A673 (cell line): ENCODE measurements at regions of chr7 and their contacts with region 1.

Region 1: GRCh38 chr7:4689668-4690067 is 7.6 kb downstream of the FOXK1 start:
- DNase-seq: no peak
- H3K4me3 ChIP-seq: peak overlapping the region; percentile 16
- H3K27ac ChIP-seq: no peak overlapping the region
- H3K4me1 ChIP-seq: peaks cover 58% of the 10 kb centered on the region
- H3K27me3 ChIP-seq: no peaks in the 10 kb centered on the region
- CTCF ChIP-seq: no peak

Region 2: DNA sequence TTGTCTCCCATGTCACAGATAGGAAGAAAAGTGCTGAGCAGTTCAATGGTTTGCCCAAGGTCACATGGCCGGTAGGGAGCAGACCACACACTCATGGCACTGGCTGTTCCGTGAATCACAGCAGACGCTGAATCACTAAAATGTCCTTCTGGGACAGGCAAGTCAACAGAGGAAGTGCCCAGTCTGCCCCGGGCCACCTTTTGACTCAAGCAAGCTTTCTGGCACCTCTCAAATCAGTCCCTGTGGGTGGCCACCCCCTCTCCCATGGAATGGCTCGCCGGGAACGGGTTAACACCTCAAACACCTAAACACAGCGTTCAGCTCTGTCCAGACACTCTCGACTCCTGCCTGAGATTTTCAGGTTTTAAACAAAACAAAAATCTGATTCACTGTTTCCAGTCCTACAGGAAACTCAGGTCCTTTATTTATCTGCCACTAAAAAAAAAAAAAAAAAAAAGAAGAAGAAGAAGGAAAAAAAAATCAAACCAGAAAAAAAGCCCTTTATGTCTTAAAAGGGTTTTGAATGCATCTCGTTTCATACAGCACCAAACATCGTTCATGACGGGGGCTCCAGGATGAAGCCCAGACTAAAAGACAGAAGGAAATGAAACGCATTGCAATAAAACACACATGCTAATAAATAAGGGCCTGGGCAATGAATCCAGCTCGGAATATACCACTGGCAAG is 1661.5 kb before region 1 on chr7:
- CTCF ChIA-PET with region 1: no interaction called
- POLR2A ChIA-PET with region 1: no interaction called
- intact Hi-C with region 1: no loop called
- DNase-seq: no peak
- H3K4me3 ChIP-seq: no peak overlapping the region
- H3K27ac ChIP-seq: no peak overlapping the region
- H3K4me1 ChIP-seq: no peaks in the 10 kb centered on the region
- H3K27me3 ChIP-seq: peaks cover 16% of the 10 kb centered on the region
- CTCF ChIP-seq: no peak

Region 3: DNA sequence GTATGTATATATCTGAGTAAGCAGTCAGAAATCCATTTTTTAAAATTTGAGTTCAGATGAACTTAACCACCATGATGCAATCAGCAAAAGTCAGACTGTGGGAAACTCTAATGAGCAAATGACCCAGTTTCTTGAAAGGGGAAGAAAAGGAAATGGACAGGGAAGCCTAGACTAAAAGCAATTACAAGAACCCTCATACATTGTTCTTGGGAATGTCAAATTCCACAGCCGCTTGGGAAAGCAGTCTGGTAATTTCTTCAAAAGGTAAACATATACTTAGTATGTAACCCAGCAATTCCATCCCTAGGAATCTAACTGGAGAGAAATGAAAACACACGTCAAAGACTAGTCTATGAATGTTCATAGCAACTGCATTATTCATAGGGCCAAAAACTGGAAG is 24.0 kb before region 1 on chr7:
- CTCF ChIA-PET with region 1: no interaction called
- POLR2A ChIA-PET with region 1: no interaction called
- intact Hi-C with region 1: no loop called
- DNase-seq: no peak
- H3K4me3 ChIP-seq: no peak overlapping the region
- H3K27ac ChIP-seq: no peak overlapping the region
- H3K4me1 ChIP-seq: peaks cover 10% of the 10 kb centered on the region
- H3K27me3 ChIP-seq: no peaks in the 10 kb centered on the region
- CTCF ChIP-seq: no peak

Region 4: DNA sequence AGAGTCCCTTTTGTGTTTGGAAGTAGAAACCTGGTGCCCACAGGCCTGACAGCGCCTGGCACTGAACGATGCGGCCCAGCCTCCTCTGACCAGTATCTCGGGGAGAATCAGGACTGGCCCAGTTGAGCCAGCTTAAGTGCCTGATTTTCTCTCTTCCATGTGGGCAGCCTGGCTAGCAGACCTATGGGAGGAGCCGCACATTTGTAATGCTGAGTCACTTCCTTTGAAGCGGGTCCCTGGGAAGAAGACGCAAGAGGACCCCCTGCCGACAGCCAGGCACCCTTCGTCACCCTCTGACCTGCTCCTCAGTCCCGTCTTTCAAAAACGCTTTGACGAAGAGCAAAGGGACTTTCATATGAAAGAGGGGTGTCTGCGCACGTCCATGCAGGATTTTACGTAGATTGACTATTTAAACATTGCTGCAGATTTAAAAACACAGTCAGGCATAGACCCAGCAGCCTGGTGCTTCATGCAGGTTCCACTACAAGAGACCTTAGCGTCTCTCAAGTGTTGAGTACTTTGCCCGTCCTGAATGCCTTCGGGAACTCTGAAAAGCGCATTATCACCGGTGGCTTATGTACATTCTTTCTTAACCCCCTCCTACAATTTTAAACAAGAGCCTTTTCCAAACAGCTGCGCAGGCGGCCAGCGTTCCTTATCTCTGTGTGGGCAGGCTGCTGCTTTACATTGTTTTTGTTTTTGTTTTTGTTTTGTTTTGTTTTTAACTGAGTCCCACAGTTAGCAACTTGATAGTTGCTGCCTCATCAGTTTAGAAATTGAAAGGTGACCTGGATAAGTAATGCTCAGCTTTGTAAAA is 49.3 kb after region 1 on chr7:
- CTCF ChIA-PET with region 1: no interaction called
- POLR2A ChIA-PET with region 1: no interaction called
- intact Hi-C with region 1: loop called (anchors 5 kb)
- DNase-seq: peak; percentile 85
- H3K4me3 ChIP-seq: peak overlapping the region; percentile 28
- H3K27ac ChIP-seq: peak overlapping the region; percentile 83
- H3K4me1 ChIP-seq: peaks cover 25% of the 10 kb centered on the region
- H3K27me3 ChIP-seq: no peaks in the 10 kb centered on the region
- CTCF ChIP-seq: no peak

Region 5: DNA sequence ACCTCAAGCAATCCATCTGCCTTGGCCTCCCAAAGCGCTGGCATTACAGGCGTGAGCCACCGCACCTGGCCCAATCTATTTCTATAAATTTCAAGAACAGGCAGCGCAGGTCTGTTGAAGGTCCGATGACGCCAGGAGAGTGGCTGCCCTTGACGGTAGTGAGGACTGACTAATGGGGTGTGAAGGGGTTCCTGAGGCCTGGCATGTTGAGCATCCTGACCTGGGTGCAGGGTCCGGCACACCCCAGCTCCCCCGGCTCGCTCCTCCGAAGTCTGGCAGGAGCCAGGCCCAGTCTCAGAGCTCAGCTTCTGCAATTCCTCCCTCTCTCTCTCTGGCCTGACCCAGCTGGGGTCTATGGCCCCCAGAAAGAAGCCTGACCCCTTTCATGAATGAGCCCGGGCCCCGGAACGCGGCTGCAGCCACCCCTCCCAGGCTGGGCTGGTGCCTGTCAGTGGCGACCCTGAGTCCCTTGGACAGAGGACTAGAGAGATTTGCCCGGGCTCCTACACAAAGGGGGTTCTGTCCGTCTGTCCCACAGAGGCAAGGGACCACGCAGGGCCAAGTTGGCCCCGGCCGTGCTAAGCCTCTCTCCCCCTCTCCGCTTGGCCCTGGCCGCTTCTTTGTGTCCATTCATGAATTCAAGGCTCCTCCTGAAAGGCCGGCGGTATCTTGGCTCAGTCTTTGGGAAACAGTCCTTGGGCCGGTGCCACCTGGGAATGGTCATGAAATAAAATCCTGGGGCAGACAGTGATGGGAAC is 250.5 kb after region 1 on chr7:
- CTCF ChIA-PET with region 1: no interaction called
- POLR2A ChIA-PET with region 1: interaction called, 19 read pairs
- intact Hi-C with region 1: no loop called
- DNase-seq: no peak
- H3K4me3 ChIP-seq: no peak overlapping the region
- H3K27ac ChIP-seq: no peak overlapping the region
- H3K4me1 ChIP-seq: no peaks in the 10 kb centered on the region
- H3K27me3 ChIP-seq: no peaks in the 10 kb centered on the region
- CTCF ChIP-seq: no peak